A549 (cell line): ENCODE measurements at regions of chr5 and their contacts with region 1.

Region 1: DNA sequence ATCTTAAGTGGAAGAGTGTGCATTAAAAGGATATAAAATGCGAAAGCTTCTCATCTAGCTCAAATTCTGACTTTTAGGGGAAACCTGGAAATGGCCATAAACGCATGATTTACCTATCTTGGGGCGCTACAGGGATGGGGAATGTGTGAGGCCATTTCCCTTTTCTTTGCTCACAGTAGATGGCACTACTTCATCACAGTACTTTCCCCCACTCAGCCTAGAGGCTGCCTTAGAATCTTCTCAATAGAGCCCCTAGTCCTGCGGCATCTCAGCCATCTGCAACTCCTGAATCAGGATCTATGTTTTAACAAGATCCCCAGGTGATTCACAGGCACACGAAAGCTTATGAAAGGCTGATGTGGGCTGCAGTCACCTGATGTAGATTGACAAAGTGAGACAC is 110.8 kb downstream of the LHFPL2 start:
- DNase-seq: peak; percentile 36 to 54
- ATAC-seq: peak; percentile 79 to 85
- H3K4me3 ChIP-seq: no peak overlapping the region
- H3K27ac ChIP-seq: peak overlapping the region; percentile 21 to 50; a peak in 5 of 6 replicates
- H3K4me1 ChIP-seq: peaks cover 22% of the 10 kb centered on the region
- CTCF ChIP-seq: peak; percentile 61
- EP300 ChIP-seq: no peak
- POLR2A ChIP-seq: no peak
- RAD21 ChIP-seq: peak; percentile 86 to 88

Region 2: DNA sequence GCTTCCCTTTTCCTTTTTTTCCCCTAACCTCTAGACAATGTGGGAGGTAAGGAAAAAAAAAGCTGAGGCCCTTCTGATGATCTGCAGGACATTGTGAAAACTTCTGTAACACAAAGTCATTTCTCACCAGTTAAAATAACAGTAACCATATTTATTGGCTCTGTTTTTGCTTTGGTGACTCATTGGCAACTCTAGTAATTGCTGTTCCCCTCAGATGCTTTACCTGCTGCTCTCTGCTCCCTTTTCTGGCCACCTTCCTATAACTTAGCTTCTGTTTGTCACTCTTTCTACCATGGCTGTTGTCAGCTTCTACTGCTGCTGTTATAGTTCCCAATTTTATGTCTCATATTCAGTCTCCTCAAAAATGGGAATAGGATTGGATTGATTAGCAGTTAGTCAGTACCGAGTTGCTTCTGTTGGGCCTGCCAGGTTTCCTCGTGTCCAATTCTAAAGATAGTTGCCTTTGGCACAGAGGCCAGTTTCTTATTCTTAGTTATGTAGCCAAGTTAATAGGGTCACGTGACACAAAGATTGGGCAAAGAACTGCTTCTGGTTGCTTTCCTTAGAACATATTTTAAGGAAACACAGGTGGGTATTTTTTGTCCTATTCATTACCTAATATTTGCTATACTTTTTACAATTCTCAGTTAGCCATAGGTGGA is 160.6 kb before region 1 on chr5:
- CTCF ChIA-PET with region 1: no interaction called
- POLR2A ChIA-PET with region 1: no interaction called
- DNase-seq: no peak
- ATAC-seq: no peak
- H3K4me3 ChIP-seq: no peak overlapping the region
- H3K27ac ChIP-seq: no peak overlapping the region
- H3K4me1 ChIP-seq: peaks cover 11% of the 10 kb centered on the region; the same call in 2 of the 3 replicates
- CTCF ChIP-seq: no peak
- EP300 ChIP-seq: no peak
- POLR2A ChIP-seq: no peak
- RAD21 ChIP-seq: no peak

Region 3: DNA sequence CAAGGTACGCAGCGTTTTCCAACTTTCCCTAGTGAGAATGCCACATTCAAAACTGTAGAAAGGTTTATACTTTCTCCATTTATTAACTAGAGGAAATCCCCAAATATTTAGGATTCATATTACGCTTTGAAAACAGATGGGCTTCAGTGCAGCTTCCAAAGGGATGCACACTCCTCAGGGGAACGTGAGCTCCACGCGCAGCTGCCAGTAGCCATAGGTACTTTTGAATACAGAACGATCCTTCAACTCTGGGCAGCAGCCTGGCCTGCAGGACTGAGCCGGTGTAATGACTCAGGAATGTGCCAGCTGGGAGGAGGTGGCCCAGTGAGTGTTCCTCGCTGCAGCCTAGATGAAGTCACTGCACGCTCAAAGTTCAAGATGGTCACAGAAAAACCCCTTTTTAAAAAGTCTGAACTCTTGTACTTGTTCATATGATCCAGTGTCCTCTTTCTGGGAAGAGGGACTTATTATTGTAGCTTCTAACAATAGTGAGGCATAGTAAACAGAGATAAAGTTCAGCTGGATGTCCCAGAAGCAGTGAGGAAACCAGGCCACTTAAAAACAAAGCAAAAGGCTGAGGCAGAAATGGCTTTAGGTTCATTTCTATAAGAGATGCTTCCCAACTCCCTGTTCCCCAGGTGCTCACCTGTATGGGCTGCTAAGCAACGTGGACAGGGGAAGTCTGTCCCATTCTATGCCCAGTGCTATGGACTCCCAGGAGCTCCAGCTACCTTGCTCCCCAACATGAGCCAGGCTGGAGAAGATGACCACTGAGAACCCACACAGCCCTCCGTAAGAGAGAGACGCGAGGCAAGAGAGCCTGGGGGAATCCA is 19.2 kb before region 1 on chr5:
- CTCF ChIA-PET with region 1: interaction called, 15 read pairs
- POLR2A ChIA-PET with region 1: no interaction called
- DNase-seq: peak; percentile 70 to 86
- ATAC-seq: peak; percentile 96 to 97
- H3K4me3 ChIP-seq: no peak overlapping the region; the same call in 2 of the 3 replicates
- H3K27ac ChIP-seq: peak overlapping the region; percentile 75 to 84
- H3K4me1 ChIP-seq: peaks cover 32% of the 10 kb centered on the region
- CTCF ChIP-seq: no peak
- EP300 ChIP-seq: no peak
- POLR2A ChIP-seq: no peak
- RAD21 ChIP-seq: no peak

Region 4: DNA sequence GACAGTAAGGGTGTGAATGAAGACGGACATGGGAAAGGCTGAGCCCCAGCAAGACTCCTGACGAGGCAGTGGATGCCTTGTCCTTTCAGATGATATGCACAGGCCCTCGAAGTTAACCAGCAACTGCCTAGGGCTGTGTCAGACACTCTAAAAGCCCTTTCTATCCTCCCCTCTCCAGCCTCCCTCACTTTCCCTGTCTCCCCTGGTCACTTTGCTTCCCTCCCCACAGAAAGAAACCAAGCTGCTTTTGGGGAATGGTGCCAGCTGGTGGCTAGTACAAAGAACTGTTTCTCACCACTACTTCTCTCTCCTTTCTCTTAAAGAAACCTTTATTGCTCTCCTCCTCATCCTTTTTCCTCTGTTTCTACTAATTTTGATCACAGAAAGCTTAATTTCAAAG is 89.4 kb after region 1 on chr5:
- CTCF ChIA-PET with region 1: interaction called, 17 read pairs
- POLR2A ChIA-PET with region 1: no interaction called
- DNase-seq: peak in 1 of 2 experiments; percentile 33
- ATAC-seq: peak in 1 of 2 experiments; percentile 52; a peak in 3 of 6 replicates
- H3K4me3 ChIP-seq: no peak overlapping the region
- H3K27ac ChIP-seq: peak overlapping the region; percentile 4 to 24; a peak in 2 of 6 replicates
- H3K4me1 ChIP-seq: peaks cover 62% of the 10 kb centered on the region
- CTCF ChIP-seq: peak; percentile 44
- EP300 ChIP-seq: no peak
- POLR2A ChIP-seq: no peak
- RAD21 ChIP-seq: peak; percentile 62 to 69

Region 5: GRCh38 chr5:78648359-78649210 is 110.8 kb after region 1 on chr5 and contains the start of gene LHFPL2:
- CTCF ChIA-PET with region 1: interaction called, 20 read pairs
- POLR2A ChIA-PET with region 1: interaction called, 5 read pairs
- DNase-seq: peak; percentile 67 to 78
- ATAC-seq: peak; percentile 81 to 86
- H3K4me3 ChIP-seq: peak within 1 kb of the TSS; percentile 97
- H3K27ac ChIP-seq: peak within 1 kb of the TSS; percentile 99 to 100
- H3K4me1 ChIP-seq: peaks cover 49% of the 10 kb centered on the region
- CTCF ChIP-seq: no peak
- EP300 ChIP-seq: no peak
- POLR2A ChIP-seq: peak; percentile 45
- RAD21 ChIP-seq: no peak; a peak in 2 of 5 replicates
- polyA plus RNA-seq, gene LHFPL2: 24.9 and 32.2 TPM in 2 replicates